GM12878 (cell line): ENCODE measurements at regions of chr18 and their contacts with region 1.

Region 1: GRCh38 chr18:12376718-12377555 is at the start of gene AFG3L2:
- DNase-seq: peak; percentile 96
- ATAC-seq: peak; percentile 89
- H3K4me3 ChIP-seq: peak within 1 kb of the TSS; percentile 99
- H3K27ac ChIP-seq: peak within 1 kb of the TSS; percentile 93
- H3K4me1 ChIP-seq: peaks cover 3% of the 10 kb centered on the region; the same call in 1 of the 2 replicates
- H3K27me3 ChIP-seq: no peaks in the 10 kb centered on the region
- CTCF ChIP-seq: no peak
- EP300 ChIP-seq: 0 out of 4 replicates have a peak, but pooled peaks of 1 of the 2 experiments have one; percentile 26
- POLR2A ChIP-seq: peak; percentile 96
- RAD21 ChIP-seq: no peak
- polyA plus RNA-seq, gene AFG3L2: 21.0 to 21.6 TPM

Region 2: GRCh38 chr18:12327510-12328178 is 49.3 kb before region 1 on chr18:
- CTCF ChIA-PET with region 1: interaction called, 16 read pairs
- POLR2A ChIA-PET with region 1: interaction called, 3 read pairs
- RAD21 ChIA-PET with region 1: interaction called, 3 read pairs
- SMC1A ChIA-PET with region 1: interaction called, 3 read pairs
- in situ Hi-C with region 1: no loop called
- intact Hi-C with region 1: no loop called
- DNase-seq: no peak
- ATAC-seq: peak; percentile 98
- H3K4me3 ChIP-seq: no peak overlapping the region
- H3K27ac ChIP-seq: no peak overlapping the region
- H3K4me1 ChIP-seq: no peaks in the 10 kb centered on the region
- H3K27me3 ChIP-seq: no peaks in the 10 kb centered on the region
- CTCF ChIP-seq: peak; percentile 70 to 94 (median 91)
- EP300 ChIP-seq: no peak
- POLR2A ChIP-seq: no peak; the same call in 1 of the 2 replicates
- RAD21 ChIP-seq: no peak; the same call in 1 of the 2 replicates

Region 3: GRCh38 chr18:12361770-12362378 is 15.1 kb before region 1 on chr18:
- CTCF ChIA-PET with region 1: no interaction called
- POLR2A ChIA-PET with region 1: interaction called, 15 read pairs
- RAD21 ChIA-PET with region 1: interaction called, 4 read pairs
- SMC1A ChIA-PET with region 1: interaction called, 6 read pairs
- in situ Hi-C with region 1: no loop called
- intact Hi-C with region 1: no loop called
- DNase-seq: no peak
- ATAC-seq: peak; percentile 33; the same call in 2 of the 3 replicates
- H3K4me3 ChIP-seq: no peak overlapping the region
- H3K27ac ChIP-seq: no peak overlapping the region
- H3K4me1 ChIP-seq: no peaks in the 10 kb centered on the region
- H3K27me3 ChIP-seq: no peaks in the 10 kb centered on the region
- CTCF ChIP-seq: no peak
- EP300 ChIP-seq: no peak
- POLR2A ChIP-seq: no peak
- RAD21 ChIP-seq: no peak

Region 4: GRCh38 chr18:12408247-12408869 is 31.4 kb after region 1 on chr18:
- CTCF ChIA-PET with region 1: interaction called, 7 read pairs
- POLR2A ChIA-PET with region 1: interaction called, 13 read pairs
- RAD21 ChIA-PET with region 1: interaction called, 17 read pairs
- SMC1A ChIA-PET with region 1: interaction called, 4 read pairs
- in situ Hi-C with region 1: no loop called
- intact Hi-C with region 1: no loop called
- DNase-seq: no peak
- ATAC-seq: no peak
- H3K4me3 ChIP-seq: peak overlapping the region; percentile 64
- H3K27ac ChIP-seq: peak overlapping the region; percentile 68
- H3K4me1 ChIP-seq: peaks cover 4% of the 10 kb centered on the region
- H3K27me3 ChIP-seq: peaks cover 3 to 9% of the 10 kb centered on the region in 2 experiments
- CTCF ChIP-seq: no peak
- EP300 ChIP-seq: no peak
- POLR2A ChIP-seq: no peak
- RAD21 ChIP-seq: no peak

Region 5: DNA sequence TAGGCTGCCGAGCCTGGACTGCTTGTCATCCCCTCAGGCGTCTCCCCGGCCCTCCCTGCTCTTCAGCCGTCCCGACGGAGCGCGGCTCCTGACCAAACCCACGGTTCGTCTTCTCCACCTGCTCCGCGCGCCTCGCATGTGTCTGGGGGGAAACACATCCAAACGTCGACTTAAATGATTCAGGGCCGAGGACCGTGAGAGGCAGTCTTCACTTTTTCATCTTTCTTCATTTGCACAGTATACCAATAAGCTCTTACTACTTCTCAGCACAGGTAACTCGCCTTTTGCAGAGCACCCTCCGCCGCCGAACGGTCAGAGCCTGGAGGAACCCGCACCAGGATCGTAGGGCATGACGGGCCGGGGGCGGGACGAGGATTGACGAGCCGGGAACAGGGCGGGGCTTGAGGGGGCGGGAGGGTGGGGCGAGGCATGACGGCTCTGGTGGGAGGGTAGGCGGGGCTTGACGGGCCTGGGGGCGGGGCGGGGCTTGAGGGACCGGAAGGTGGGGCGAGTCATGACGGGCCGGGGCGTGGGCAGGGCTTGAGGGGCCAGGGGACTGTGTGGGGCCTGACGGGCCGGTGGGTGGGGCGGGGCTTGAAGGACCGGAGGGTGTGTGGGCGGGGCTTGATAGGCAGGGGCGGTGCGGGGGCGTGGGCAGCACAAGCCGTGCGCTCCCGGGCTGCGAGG is 570.6 kb after region 1 on chr18 and contains the start of gene SEH1L:
- CTCF ChIA-PET with region 1: no interaction called
- POLR2A ChIA-PET with region 1: no interaction called
- RAD21 ChIA-PET with region 1: no interaction called
- SMC1A ChIA-PET with region 1: no interaction called
- in situ Hi-C with region 1: loop called (anchors 5 kb)
- intact Hi-C with region 1: loop called (anchors 5 kb)
- DNase-seq: peak; percentile 89
- ATAC-seq: peak; percentile 92
- H3K4me3 ChIP-seq: peak within 1 kb of the TSS; percentile 92
- H3K27ac ChIP-seq: peak within 1 kb of the TSS; percentile 87
- H3K4me1 ChIP-seq: peaks cover 4% of the 10 kb centered on the region; the same call in 1 of the 2 replicates
- H3K27me3 ChIP-seq: no peaks in the 10 kb centered on the region
- CTCF ChIP-seq: no peak
- EP300 ChIP-seq: no peak
- POLR2A ChIP-seq: 0 out of 2 replicates have a peak, but pooled peaks have one; percentile 7
- RAD21 ChIP-seq: no peak
- polyA plus RNA-seq, gene SEH1L: 27.5 to 52.4 TPM